ENCODE measurements at regions of chr19 and their contacts with region 1.

Region 1: GRCh38 chr19:46542428-46543230 is 47.0 kb upstream of the PNMA8B start:
- DNase-seq: peak; percentile 85
- H3K4me3 ChIP-seq: no peak overlapping the region
- H3K27ac ChIP-seq: no peak overlapping the region
- H3K4me1 ChIP-seq: no peaks in the 10 kb centered on the region
- H3K27me3 ChIP-seq: no peaks in the 10 kb centered on the region
- CTCF ChIP-seq: peak; percentile 92

Region 2: GRCh38 chr19:46453661-46454060 is 89.0 kb before region 1 on chr19:
- CTCF ChIA-PET with region 1: no interaction called
- POLR2A ChIA-PET with region 1: no interaction called
- intact Hi-C with region 1: no loop called
- DNase-seq: no peak
- H3K4me3 ChIP-seq: no peak overlapping the region
- H3K27ac ChIP-seq: no peak overlapping the region
- H3K4me1 ChIP-seq: no peaks in the 10 kb centered on the region
- H3K27me3 ChIP-seq: no peaks in the 10 kb centered on the region
- CTCF ChIP-seq: no peak

Region 3: DNA sequence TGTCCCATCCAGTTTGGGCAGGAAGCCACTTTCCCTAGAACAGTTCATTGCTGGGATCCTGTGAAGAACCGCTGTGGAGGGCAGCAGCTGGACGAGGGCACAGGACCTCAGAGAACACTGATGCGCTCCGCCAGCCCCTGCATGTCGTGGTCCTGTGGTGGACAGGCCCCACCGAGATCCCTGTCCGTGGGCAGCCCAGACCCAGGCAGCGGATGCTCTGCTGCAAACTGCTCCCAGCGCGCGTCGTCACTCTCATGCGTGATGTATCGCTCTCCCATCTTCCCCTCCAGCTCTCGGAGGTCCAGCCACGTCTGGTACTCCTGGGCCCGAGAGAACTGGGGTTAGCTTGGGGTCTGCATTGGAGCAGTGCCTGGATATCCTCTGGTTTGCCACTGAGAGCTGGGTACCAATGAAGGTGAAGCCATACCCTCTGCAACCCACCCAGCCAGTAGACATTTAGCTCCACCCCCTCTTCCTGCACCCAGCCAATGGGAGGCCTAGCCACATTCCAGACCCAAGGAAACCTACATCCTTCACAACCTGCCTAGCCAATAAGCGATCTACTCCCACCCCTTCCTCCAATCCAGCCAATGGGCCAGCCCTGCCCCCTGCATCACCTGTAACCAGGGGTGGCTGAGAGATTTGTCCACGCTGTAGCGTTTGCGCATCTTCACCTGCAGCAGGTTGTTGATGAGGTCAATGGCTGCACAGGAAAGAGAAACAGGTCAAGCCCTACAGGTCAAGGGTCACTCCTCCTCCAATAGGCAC is 132.0 kb after region 1 on chr19:
- CTCF ChIA-PET with region 1: no interaction called
- POLR2A ChIA-PET with region 1: no interaction called
- intact Hi-C with region 1: no loop called
- DNase-seq: peak; percentile 58
- H3K4me3 ChIP-seq: no peak overlapping the region
- H3K27ac ChIP-seq: no peak overlapping the region
- H3K4me1 ChIP-seq: no peaks in the 10 kb centered on the region
- H3K27me3 ChIP-seq: no peaks in the 10 kb centered on the region
- CTCF ChIP-seq: no peak

Region 4: GRCh38 chr19:46704379-46705076 is 161.9 kb after region 1 on chr19:
- CTCF ChIA-PET with region 1: interaction called, 11 read pairs
- POLR2A ChIA-PET with region 1: no interaction called
- intact Hi-C with region 1: no loop called
- DNase-seq: peak; percentile 70
- H3K4me3 ChIP-seq: no peak overlapping the region
- H3K27ac ChIP-seq: no peak overlapping the region
- H3K4me1 ChIP-seq: no peaks in the 10 kb centered on the region
- H3K27me3 ChIP-seq: no peaks in the 10 kb centered on the region
- CTCF ChIP-seq: peak; percentile 96

Region 5: GRCh38 chr19:46766569-46767317 is 224.1 kb after region 1 on chr19:
- CTCF ChIA-PET with region 1: no interaction called
- POLR2A ChIA-PET with region 1: no interaction called
- intact Hi-C with region 1: no loop called
- DNase-seq: peak; percentile 62
- H3K4me3 ChIP-seq: no peak overlapping the region
- H3K27ac ChIP-seq: no peak overlapping the region
- H3K4me1 ChIP-seq: no peaks in the 10 kb centered on the region
- H3K27me3 ChIP-seq: no peaks in the 10 kb centered on the region
- CTCF ChIP-seq: peak; percentile 90

Measured in A673 (cell line).